Uterus (tissue), 4 donors: ENCODE measurements at regions of chr9 and their contacts with region 1.

Region 1: GRCh38 chr9:129482521-129483414 is 138.1 kb downstream of the C9orf50 start:
- DNase-seq: peak; percentile 91 to 96
- H3K4me3 ChIP-seq: peak overlapping the region; percentile 43 to 50
- H3K27ac ChIP-seq: peak overlapping the region; percentile 100
- H3K4me1 ChIP-seq: peaks cover 17 to 27% of the 10 kb centered on the region in 2 donors
- H3K27me3 ChIP-seq: no peaks in the 10 kb centered on the region
- CTCF ChIP-seq: no peak
- POLR2A ChIP-seq: peak; percentile 14 to 51

Region 2: DNA sequence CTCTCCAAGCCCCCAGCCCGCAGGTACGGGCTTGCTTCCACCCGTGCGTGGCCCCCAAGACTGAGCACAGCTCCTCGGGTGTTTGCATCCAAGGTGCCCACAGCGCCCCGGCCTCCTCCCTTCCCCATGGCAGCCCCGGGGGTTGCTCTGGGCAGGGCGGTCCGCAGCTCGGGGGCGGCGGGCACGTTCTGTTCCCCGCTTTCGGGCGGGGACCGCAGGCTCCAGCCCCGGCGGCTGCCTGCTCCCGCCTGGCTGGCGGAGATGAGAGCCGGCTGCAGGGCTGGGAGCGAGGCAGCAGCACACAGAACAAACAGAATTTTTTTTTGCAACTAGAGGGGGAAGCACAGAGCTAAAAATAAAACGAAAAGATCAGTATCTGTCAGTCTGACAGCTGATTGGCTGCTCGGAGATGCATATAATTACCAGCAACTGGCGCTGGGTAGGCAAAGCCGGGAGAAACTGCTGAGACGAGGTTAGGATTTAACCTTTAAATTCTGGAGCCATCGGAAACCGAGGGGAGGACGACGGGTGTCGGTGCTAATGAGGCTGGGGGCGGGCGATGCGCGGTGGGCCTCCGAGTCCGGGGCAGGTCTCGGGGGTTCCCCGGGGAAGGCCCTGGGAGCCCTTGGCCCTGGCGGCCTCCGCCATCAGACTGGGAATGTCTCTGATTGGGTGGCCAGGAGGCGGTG is 162.0 kb before region 1 on chr9:
- intact Hi-C with region 1: loop called (anchors 5 kb)
- DNase-seq: peak; percentile 73 to 86
- H3K4me3 ChIP-seq: peak overlapping the region; percentile 35 to 37
- H3K27ac ChIP-seq: peak overlapping the region; percentile 95 to 99
- H3K4me1 ChIP-seq: peaks cover 16 to 38% of the 10 kb centered on the region in 2 donors
- H3K27me3 ChIP-seq: no peaks in the 10 kb centered on the region
- CTCF ChIP-seq: peak in 3 of 4 experiments; percentile 15 to 55 (median 25)
- POLR2A ChIP-seq: peak; percentile 74 to 77

Region 3: GRCh38 chr9:129401628-129402370 is 81.0 kb before region 1 on chr9:
- intact Hi-C with region 1: loop called (anchors 5 kb)
- DNase-seq: peak; percentile 67 to 81
- H3K4me3 ChIP-seq: peak overlapping the region in 1 of 2 donors; percentile 15
- H3K27ac ChIP-seq: peak overlapping the region; percentile 88 to 92
- H3K4me1 ChIP-seq: peaks cover 4 to 33% of the 10 kb centered on the region in 2 donors
- H3K27me3 ChIP-seq: no peaks in the 10 kb centered on the region
- CTCF ChIP-seq: no peak
- POLR2A ChIP-seq: no peak